Activated T-helper 2 cell treated with anti-CD3 and anti-CD28 coated beads, Interferon-gamma antibody, Interleukin-2, Interleukin-4, amounts not matched to agents 10 μg/mL and 5 μg/mL and 100 μg/mL, durations not matched to agents 14 hours and 24 hours and 36 hours (primary cell): ENCODE measurements at regions of chr15 and their contacts with region 1.

Region 1: GRCh38 chr15:59966262-59966661 is 37.8 kb upstream of the FOXB1 start:
- DNase-seq: no peak
- H3K4me3 Mint-ChIP-seq: no peak overlapping the region
- H3K27ac Mint-ChIP-seq: peak overlapping the region; percentile 15
- H3K4me1 Mint-ChIP-seq: peaks cover 23% of the 10 kb centered on the region
- H3K27me3 Mint-ChIP-seq: peaks cover 6% of the 10 kb centered on the region

Region 2: GRCh38 chr15:59247364-59247763 is 718.9 kb before region 1 on chr15:
- intact Hi-C with region 1: no loop called
- DNase-seq: peak; percentile 45
- H3K4me3 Mint-ChIP-seq: no peak overlapping the region
- H3K27ac Mint-ChIP-seq: no peak overlapping the region
- H3K4me1 Mint-ChIP-seq: peaks cover 39% of the 10 kb centered on the region
- H3K27me3 Mint-ChIP-seq: peaks cover 2% of the 10 kb centered on the region

Region 3: GRCh38 chr15:59976480-59977271 is 10.4 kb after region 1 on chr15:
- intact Hi-C with region 1: loop called (anchors 1 kb)
- DNase-seq: peak; percentile 75
- H3K4me3 Mint-ChIP-seq: peak overlapping the region; percentile 55
- H3K27ac Mint-ChIP-seq: peak overlapping the region; percentile 81
- H3K4me1 Mint-ChIP-seq: peaks cover 42% of the 10 kb centered on the region
- H3K27me3 Mint-ChIP-seq: peaks cover 8% of the 10 kb centered on the region

Region 4: GRCh38 chr15:60021589-60022378 is 55.5 kb after region 1 on chr15:
- intact Hi-C with region 1: no loop called
- DNase-seq: no peak
- H3K4me3 Mint-ChIP-seq: no peak overlapping the region
- H3K27ac Mint-ChIP-seq: no peak overlapping the region
- H3K4me1 Mint-ChIP-seq: peaks cover 42% of the 10 kb centered on the region
- H3K27me3 Mint-ChIP-seq: no peaks in the 10 kb centered on the region